ENCODE measurements at regions of chr2 and their contacts with region 1.

Region 1: GRCh38 chr2:73176881-73177644 is 25.3 kb upstream of the NOTO start:
- H3K4me3 Mint-ChIP-seq: peak overlapping the region; percentile 88
- H3K27ac Mint-ChIP-seq: peak overlapping the region; percentile 82
- H3K4me1 Mint-ChIP-seq: peaks cover 16% of the 10 kb centered on the region
- H3K27me3 Mint-ChIP-seq: peaks cover 79% of the 10 kb centered on the region

Region 2: GRCh38 chr2:72887754-72888437 is 289.2 kb before region 1 on chr2:
- intact Hi-C with region 1: loop called (anchors 1 kb)
- H3K4me3 Mint-ChIP-seq: peak overlapping the region; percentile 73
- H3K27ac Mint-ChIP-seq: peak overlapping the region; percentile 22
- H3K4me1 Mint-ChIP-seq: peaks cover 55% of the 10 kb centered on the region
- H3K27me3 Mint-ChIP-seq: peaks cover 52% of the 10 kb centered on the region

Region 3: GRCh38 chr2:72993147-72993932 is 183.7 kb before region 1 on chr2:
- intact Hi-C with region 1: loop called (anchors 1 kb)
- H3K4me3 Mint-ChIP-seq: no peak overlapping the region
- H3K27ac Mint-ChIP-seq: no peak overlapping the region
- H3K4me1 Mint-ChIP-seq: no peaks in the 10 kb centered on the region
- H3K27me3 Mint-ChIP-seq: no peaks in the 10 kb centered on the region

Region 4: GRCh38 chr2:73085691-73086360 is 91.2 kb before region 1 on chr2:
- intact Hi-C with region 1: loop called (anchors 5 kb)
- H3K4me3 Mint-ChIP-seq: no peak overlapping the region
- H3K27ac Mint-ChIP-seq: no peak overlapping the region
- H3K4me1 Mint-ChIP-seq: no peaks in the 10 kb centered on the region
- H3K27me3 Mint-ChIP-seq: peaks cover 8% of the 10 kb centered on the region

Region 5: GRCh38 chr2:73212448-73213176 is 35.5 kb after region 1 on chr2:
- intact Hi-C with region 1: loop called (anchors 1 kb)
- H3K4me3 Mint-ChIP-seq: no peak overlapping the region
- H3K27ac Mint-ChIP-seq: no peak overlapping the region
- H3K4me1 Mint-ChIP-seq: peaks cover 26% of the 10 kb centered on the region
- H3K27me3 Mint-ChIP-seq: peaks cover 8% of the 10 kb centered on the region

Region 6: GRCh38 chr2:73233154-73233931 is 56.3 kb after region 1 on chr2 and contains the start of gene PRADC1:
- intact Hi-C with region 1: loop called (anchors 2 kb)
- H3K4me3 Mint-ChIP-seq: peak within 1 kb of the TSS; percentile 90
- H3K27ac Mint-ChIP-seq: peak within 1 kb of the TSS; percentile 89
- H3K4me1 Mint-ChIP-seq: peaks cover 35% of the 10 kb centered on the region
- H3K27me3 Mint-ChIP-seq: no peaks in the 10 kb centered on the region

Region 7: GRCh38 chr2:73759285-73759764 is 582.3 kb after region 1 on chr2:
- intact Hi-C with region 1: no loop called
- H3K4me3 Mint-ChIP-seq: no peak overlapping the region
- H3K27ac Mint-ChIP-seq: no peak overlapping the region
- H3K4me1 Mint-ChIP-seq: no peaks in the 10 kb centered on the region
- H3K27me3 Mint-ChIP-seq: no peaks in the 10 kb centered on the region

Measured in dendritic cell treated with granulocyte-macrophage colony-stimulating factor and Interleukin-4, amounts not matched to agents 40 ng/mL and 50 ng/mL, for 4 days (primary cell).